Activated CD8-positive, alpha-beta T cell treated with anti-CD3 and anti-CD28 coated beads, Interleukin-2, amount 10 ng/mL, durations not matched to agents 7 days and 5 days (primary cell): ENCODE measurements at regions of chr6 and their contacts with region 1.

Region 1: GRCh38 chr6:158072083-158072721 is 90.5 kb downstream of the SYNJ2 start:
- DNase-seq: peak; percentile 82
- ATAC-seq: peak; percentile 70
- H3K4me3 Mint-ChIP-seq: no peak overlapping the region
- H3K27ac Mint-ChIP-seq: peak overlapping the region; percentile 70
- H3K4me1 Mint-ChIP-seq: peaks cover 38% of the 10 kb centered on the region
- H3K27me3 Mint-ChIP-seq: no peaks in the 10 kb centered on the region

Region 2: GRCh38 chr6:158018041-158018771 is 54.0 kb before region 1 on chr6:
- CTCF ChIA-PET with region 1: interaction called, 10 read pairs
- POLR2A ChIA-PET with region 1: no interaction called
- DNase-seq: no peak
- ATAC-seq: no peak
- H3K4me3 Mint-ChIP-seq: no peak overlapping the region
- H3K27ac Mint-ChIP-seq: no peak overlapping the region
- H3K4me1 Mint-ChIP-seq: peaks cover 28% of the 10 kb centered on the region
- H3K27me3 Mint-ChIP-seq: no peaks in the 10 kb centered on the region

Region 3: DNA sequence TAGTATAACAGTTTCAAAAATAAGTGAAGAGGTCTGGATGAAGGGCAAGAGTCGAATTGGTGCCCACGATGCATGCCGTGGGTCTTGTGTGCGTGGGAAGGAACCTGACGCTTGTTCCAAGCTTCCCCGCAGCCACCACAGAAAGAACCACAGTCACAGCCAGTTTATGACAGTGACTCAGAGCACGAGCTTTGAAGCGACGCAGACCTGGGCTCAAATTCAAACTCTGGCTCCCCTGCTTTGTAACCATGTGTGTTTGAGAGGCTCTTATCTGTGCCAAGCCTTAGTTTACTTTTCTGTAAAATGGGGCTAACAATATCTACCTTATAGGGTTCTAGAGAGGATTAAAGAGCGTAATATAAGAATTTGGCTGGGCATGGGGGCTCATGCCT is 25.1 kb before region 1 on chr6:
- CTCF ChIA-PET with region 1: interaction called, 24 read pairs
- POLR2A ChIA-PET with region 1: interaction called, 9 read pairs
- DNase-seq: peak; percentile 75
- ATAC-seq: peak; percentile 67
- H3K4me3 Mint-ChIP-seq: no peak overlapping the region
- H3K27ac Mint-ChIP-seq: peak overlapping the region; percentile 82
- H3K4me1 Mint-ChIP-seq: peaks cover 32% of the 10 kb centered on the region
- H3K27me3 Mint-ChIP-seq: no peaks in the 10 kb centered on the region

Region 4: DNA sequence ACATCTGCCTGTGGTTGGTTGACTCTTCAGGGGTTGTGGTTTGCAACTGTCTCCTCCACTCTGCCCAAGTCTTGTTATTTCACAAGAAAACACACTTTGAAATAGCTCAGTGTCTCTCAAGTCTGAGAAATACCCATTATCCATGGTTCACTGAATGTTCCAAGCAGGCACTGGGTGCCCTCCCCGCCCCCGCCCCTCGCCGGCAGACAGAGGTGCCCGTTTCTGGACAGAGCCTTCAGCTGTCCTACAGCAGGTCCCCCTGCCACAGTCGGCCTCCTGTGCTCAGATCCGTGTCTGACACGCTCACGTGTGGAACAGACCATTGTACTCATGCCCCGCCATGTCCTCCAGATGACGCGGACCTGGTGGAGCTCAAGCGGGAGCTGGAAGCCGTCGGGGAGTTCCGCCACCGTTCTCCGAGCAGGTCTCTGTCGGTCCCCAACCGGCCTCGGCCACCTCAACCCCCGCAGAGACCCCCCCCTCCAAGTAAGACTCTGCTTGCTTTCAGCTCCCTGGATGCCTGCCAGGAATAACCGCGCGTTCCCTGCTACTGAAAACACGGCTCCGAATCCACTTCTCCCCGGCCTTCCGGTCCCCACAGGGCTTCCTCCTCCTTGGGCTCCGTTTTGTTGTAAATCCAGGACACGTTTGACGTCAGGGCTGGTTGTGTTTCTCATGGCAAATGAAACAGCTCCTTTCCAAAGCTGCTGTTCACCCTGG is 14.5 kb after region 1 on chr6:
- CTCF ChIA-PET with region 1: interaction called, 32 read pairs
- POLR2A ChIA-PET with region 1: interaction called, 3 read pairs
- DNase-seq: peak; percentile 41
- ATAC-seq: peak; percentile 91
- H3K4me3 Mint-ChIP-seq: no peak overlapping the region
- H3K27ac Mint-ChIP-seq: peak overlapping the region; percentile 77
- H3K4me1 Mint-ChIP-seq: peaks cover 22% of the 10 kb centered on the region
- H3K27me3 Mint-ChIP-seq: no peaks in the 10 kb centered on the region

Region 5: DNA sequence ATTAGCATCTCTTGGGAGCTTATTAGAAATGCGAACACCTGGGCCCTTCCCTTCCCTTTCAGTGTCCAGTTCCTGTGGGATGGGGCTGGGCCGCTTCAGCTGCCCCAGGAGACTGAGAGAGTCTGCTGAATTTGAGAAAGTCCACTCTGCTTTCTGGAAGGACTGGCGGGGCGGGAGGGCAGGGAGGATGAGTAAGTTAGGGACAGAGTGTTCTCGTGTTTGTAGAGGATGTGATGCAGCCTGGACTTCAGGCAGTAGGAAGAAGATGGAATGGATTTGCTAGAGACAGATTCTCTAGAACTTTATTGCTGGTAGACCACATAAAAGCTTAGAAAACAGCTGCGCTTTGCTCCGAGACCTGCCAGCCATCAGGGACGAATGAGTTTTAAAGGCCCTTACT is 239.0 kb after region 1 on chr6:
- CTCF ChIA-PET with region 1: no interaction called
- POLR2A ChIA-PET with region 1: no interaction called
- DNase-seq: no peak
- ATAC-seq: no peak
- H3K4me3 Mint-ChIP-seq: no peak overlapping the region
- H3K27ac Mint-ChIP-seq: no peak overlapping the region
- H3K4me1 Mint-ChIP-seq: peaks cover 16% of the 10 kb centered on the region
- H3K27me3 Mint-ChIP-seq: no peaks in the 10 kb centered on the region